Dorsolateral prefrontal cortex (tissue), 120 donors: ENCODE measurements at regions of chr12 and their contacts with region 1.

Region 1: GRCh38 chr12:28937196-28937595 is 211.9 kb upstream of the FAR2 start:
- DNase-seq: no peak
- H3K4me3 ChIP-seq: no peak overlapping the region
- H3K27ac ChIP-seq: no peak overlapping the region
- H3K27me3 ChIP-seq: no peaks in the 10 kb centered on the region
- CTCF ChIP-seq: no peak

Region 2: GRCh38 chr12:28460420-28461130 is 476.6 kb before region 1 on chr12:
- intact Hi-C with region 1: no loop called
- DNase-seq: no peak
- H3K4me3 ChIP-seq: no peak overlapping the region
- H3K27ac ChIP-seq: no peak overlapping the region
- H3K27me3 ChIP-seq: no peaks in the 10 kb centered on the region
- CTCF ChIP-seq: no peak

Region 3: GRCh38 chr12:29066011-29066588 is 128.9 kb after region 1 on chr12:
- intact Hi-C with region 1: loop called in 1 of 2 experiments (anchors 5 kb)
- DNase-seq: peak; percentile 7 to 84 (median 67)
- H3K4me3 ChIP-seq: peak overlapping the region in 1 of 59 donors; percentile 9
- H3K27ac ChIP-seq: peak overlapping the region in 58 of 59 donors; percentile 54 to 95 (median 84)
- H3K27me3 ChIP-seq: no peaks in the 10 kb centered on the region
- CTCF ChIP-seq: peak in 6 of 56 donors; percentile 6 to 22 (median 18)

Region 4: GRCh38 chr12:29133181-29133580 is 196.0 kb after region 1 on chr12:
- intact Hi-C with region 1: no loop called
- DNase-seq: no peak
- H3K4me3 ChIP-seq: no peak overlapping the region
- H3K27ac ChIP-seq: no peak overlapping the region
- H3K27me3 ChIP-seq: peaks cover 0 to 3% (median 0%) of the 10 kb centered on the region in 45 donors
- CTCF ChIP-seq: no peak